Cardiac septum (tissue), 1 donor: ENCODE measurements at regions of chr3 and their contacts with region 1.

Region 1: DNA sequence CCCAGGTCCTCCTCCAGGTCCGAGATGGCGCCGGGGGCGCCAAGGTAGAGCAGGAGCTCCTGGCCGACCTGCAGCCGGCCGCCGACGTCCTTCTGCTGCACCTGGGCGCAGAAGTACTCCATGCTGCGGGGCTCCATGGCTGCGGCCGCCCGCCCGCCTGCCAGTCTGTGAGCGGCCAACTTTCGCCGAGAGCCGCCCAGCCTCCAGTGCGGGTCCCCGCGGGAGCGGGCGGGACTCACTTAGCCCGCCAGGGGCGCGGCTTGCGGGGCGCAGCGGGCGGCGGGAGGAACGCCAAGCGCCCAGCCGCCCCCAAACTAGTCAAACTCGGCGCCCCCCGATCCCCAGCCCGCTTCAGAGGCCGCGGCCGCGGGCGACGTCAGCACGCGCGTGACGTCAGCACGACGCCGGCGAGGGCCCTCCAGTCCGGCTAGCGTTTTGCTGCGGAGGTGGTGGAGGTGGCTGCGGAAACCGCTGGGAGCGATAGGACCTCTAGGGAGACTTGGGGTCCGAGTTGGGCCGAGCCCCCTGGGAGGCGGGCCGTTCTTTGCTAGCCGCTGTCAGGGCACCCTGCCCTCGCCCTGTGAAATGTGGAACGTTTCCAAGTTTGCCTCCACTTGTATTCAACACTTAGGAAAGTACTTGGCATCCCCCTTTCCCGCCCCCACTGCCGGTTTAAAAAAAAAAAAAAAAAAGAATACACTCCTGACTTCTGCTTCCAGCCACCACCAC is at the start of gene CLASP2:
- DNase-seq: peak; percentile 94
- total RNA-seq, gene CLASP2: 70.1 TPM

Region 2: GRCh38 chr3:33440323-33441232 is 277.5 kb before region 1 on chr3 and contains the start of gene UBP1:
- intact Hi-C with region 1: loop called (anchors 5 kb)
- DNase-seq: peak; percentile 100
- total RNA-seq, gene UBP1: 46.9 TPM

Region 3: GRCh38 chr3:33636125-33636850 is 81.7 kb before region 1 on chr3:
- intact Hi-C with region 1: loop called (anchors 2 kb)
- DNase-seq: no peak

Region 4: GRCh38 chr3:33658991-33659848 is 58.8 kb before region 1 on chr3:
- intact Hi-C with region 1: loop called (anchors 2 kb)
- DNase-seq: peak; percentile 84

Region 5: GRCh38 chr3:33773637-33774036 is 55.6 kb after region 1 on chr3:
- intact Hi-C with region 1: no loop called
- DNase-seq: no peak

Region 6: DNA sequence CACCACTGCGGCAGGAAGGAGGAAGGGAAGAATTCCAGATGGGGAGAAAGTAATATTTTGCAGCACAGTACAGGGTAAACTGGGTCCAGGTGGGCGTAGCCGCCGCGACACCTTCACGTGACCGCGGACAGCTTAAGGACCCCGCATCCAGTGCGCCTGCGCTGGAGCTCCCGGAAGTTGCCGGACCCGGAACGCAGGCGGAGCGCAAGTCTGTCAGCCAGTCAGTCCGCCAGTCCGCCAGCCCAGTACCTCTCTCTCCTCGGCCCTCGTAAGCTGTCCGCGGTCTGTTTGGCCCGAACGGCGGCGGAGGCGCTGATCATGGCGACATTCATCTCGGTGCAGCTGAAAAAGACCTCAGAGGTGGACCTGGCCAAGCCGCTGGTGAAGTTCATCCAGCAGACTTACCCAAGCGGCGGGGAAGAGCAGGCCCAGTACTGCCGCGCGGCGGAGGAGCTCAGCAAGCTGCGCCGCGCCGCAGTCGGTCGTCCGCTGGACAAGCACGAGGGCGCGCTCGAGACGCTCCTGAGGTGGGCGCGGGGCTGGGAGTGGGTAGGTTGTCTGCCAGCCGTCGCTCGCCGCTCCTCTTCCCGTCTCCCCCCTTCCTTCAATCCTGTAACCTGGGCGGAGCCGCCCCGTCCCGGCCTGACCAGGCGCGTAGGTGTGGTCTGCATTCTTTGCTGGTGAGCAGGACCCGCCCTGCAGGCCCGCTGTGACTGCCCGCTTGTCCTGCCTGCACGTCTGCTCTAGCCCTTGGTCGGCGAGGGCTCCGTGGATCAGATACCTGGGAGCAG is 80.6 kb after region 1 on chr3 and contains the start of gene PDCD6IP:
- intact Hi-C with region 1: loop called (anchors 5 kb)
- DNase-seq: peak; percentile 97
- total RNA-seq, gene PDCD6IP: 134 TPM